ENCODE measurements at regions of chr1 and their contacts with region 1.

Region 1: GRCh38 chr1:165597883-165598675 is 33.0 kb upstream of the MGST3 start:
- DNase-seq: peak; percentile 98
- H3K4me3 Mint-ChIP-seq: peak overlapping the region; percentile 91
- H3K27ac Mint-ChIP-seq: peak overlapping the region; percentile 84
- H3K4me1 Mint-ChIP-seq: peaks cover 33% of the 10 kb centered on the region
- H3K27me3 Mint-ChIP-seq: peaks cover 20% of the 10 kb centered on the region

Region 2: DNA sequence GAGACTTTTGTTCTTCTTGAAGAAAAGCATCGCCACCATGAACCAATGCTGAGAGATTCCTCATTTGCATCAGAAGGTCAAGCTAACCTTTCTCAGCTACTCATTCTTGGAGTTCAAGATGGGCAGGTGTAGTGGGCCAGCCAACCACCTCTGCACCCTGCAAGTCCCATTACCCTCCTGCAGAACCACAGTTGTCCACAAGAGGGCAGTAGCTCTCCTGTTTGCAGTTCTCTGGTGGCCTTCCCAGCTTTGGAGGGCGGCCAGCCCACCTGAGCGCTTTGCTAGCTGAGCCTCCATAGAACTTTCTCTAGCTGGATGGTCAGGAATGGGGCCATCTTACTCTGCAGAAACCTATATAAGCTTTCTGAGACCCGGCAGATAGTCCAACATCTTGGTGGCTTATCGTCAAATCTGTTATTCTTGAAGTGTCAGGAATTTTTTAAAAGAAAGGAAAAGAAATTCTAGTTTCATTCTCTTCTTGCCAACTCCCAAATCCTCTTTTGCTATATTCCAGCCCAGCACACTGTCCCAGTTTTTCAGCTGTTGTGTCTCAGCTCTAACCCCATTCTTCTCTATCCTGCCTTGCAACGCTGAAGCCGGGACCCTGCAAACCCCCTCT is 230.6 kb before region 1 on chr1:
- CTCF ChIA-PET with region 1: interaction called, 42 read pairs
- POLR2A ChIA-PET with region 1: no interaction called
- intact Hi-C with region 1: no loop called
- DNase-seq: peak; percentile 81
- H3K4me3 Mint-ChIP-seq: no peak overlapping the region
- H3K27ac Mint-ChIP-seq: no peak overlapping the region
- H3K4me1 Mint-ChIP-seq: no peaks in the 10 kb centered on the region
- H3K27me3 Mint-ChIP-seq: peaks cover 54% of the 10 kb centered on the region

Region 3: DNA sequence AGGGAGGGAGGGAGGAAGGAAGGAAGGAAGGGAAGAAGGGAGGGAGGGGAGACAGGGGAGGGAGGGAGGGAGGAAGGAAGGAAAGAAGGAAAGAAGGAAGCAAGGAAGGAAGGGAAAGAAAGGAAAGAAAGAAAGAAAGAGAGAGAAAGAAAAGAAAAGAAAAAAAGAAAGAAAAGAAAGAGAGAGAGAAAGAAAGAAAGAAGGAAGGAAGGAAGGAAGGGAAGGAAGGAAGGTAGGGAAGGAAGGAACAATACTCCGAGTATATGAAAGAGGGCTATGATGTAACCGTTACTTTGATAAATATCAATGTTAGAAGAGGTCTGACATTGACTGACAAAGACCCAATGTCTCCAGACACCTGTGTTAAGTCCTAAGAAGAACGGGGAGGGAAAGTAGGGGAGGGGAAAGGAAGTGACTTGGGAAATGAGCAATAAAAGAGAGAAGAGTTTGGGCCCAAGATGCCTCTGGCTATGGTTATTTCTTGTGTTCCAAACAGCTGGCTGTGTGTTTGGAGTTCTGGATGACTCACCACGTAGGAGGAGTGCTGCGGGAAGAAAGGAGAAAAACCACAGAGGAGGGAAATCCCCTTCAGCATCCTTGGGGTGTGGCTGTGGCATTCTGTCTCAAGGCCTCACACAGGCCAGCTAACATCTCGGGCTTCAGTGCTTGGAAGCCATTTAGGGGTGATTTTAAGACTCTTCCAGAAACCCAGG is 116.1 kb before region 1 on chr1:
- CTCF ChIA-PET with region 1: interaction called, 4 read pairs
- POLR2A ChIA-PET with region 1: no interaction called
- intact Hi-C with region 1: loop called (anchors 5 kb)
- DNase-seq: peak; percentile 41
- H3K4me3 Mint-ChIP-seq: no peak overlapping the region
- H3K27ac Mint-ChIP-seq: no peak overlapping the region
- H3K4me1 Mint-ChIP-seq: peaks cover 18% of the 10 kb centered on the region
- H3K27me3 Mint-ChIP-seq: peaks cover 13% of the 10 kb centered on the region

Region 4: GRCh38 chr1:165697881-165698760 is 100.0 kb after region 1 on chr1 and contains the start of gene ALDH9A1:
- CTCF ChIA-PET with region 1: interaction called, 19 read pairs
- POLR2A ChIA-PET with region 1: interaction called, 17 read pairs
- intact Hi-C with region 1: loop called (anchors 1 kb)
- DNase-seq: peak; percentile 93
- H3K4me3 Mint-ChIP-seq: peak within 1 kb of the TSS; percentile 100
- H3K27ac Mint-ChIP-seq: peak within 1 kb of the TSS; percentile 99
- H3K4me1 Mint-ChIP-seq: peaks cover 25% of the 10 kb centered on the region
- H3K27me3 Mint-ChIP-seq: no peaks in the 10 kb centered on the region
- total RNA-seq, gene ALDH9A1: 34.1 to 43.2 TPM

Region 5: GRCh38 chr1:165907256-165907857 is 309.3 kb after region 1 on chr1:
- CTCF ChIA-PET with region 1: interaction called, 81 read pairs
- POLR2A ChIA-PET with region 1: no interaction called
- intact Hi-C with region 1: no loop called
- DNase-seq: no peak
- H3K4me3 Mint-ChIP-seq: no peak overlapping the region
- H3K27ac Mint-ChIP-seq: no peak overlapping the region
- H3K4me1 Mint-ChIP-seq: no peaks in the 10 kb centered on the region
- H3K27me3 Mint-ChIP-seq: no peaks in the 10 kb centered on the region

Region 6: GRCh38 chr1:166489670-166490436 is 891.8 kb after region 1 on chr1:
- CTCF ChIA-PET with region 1: no interaction called
- POLR2A ChIA-PET with region 1: no interaction called
- intact Hi-C with region 1: loop called (anchors 10 kb)
- DNase-seq: peak; percentile 58
- H3K4me3 Mint-ChIP-seq: no peak overlapping the region
- H3K27ac Mint-ChIP-seq: no peak overlapping the region
- H3K4me1 Mint-ChIP-seq: peaks cover 8% of the 10 kb centered on the region
- H3K27me3 Mint-ChIP-seq: peaks cover 1% of the 10 kb centered on the region